ENCODE measurements at regions of chr10 and their contacts with region 1.

Region 1: GRCh38 chr10:102917962-102918816 is at the start of gene CNNM2:
- DNase-seq: peak; percentile 99 to 100 (median 100)

Region 2: DNA sequence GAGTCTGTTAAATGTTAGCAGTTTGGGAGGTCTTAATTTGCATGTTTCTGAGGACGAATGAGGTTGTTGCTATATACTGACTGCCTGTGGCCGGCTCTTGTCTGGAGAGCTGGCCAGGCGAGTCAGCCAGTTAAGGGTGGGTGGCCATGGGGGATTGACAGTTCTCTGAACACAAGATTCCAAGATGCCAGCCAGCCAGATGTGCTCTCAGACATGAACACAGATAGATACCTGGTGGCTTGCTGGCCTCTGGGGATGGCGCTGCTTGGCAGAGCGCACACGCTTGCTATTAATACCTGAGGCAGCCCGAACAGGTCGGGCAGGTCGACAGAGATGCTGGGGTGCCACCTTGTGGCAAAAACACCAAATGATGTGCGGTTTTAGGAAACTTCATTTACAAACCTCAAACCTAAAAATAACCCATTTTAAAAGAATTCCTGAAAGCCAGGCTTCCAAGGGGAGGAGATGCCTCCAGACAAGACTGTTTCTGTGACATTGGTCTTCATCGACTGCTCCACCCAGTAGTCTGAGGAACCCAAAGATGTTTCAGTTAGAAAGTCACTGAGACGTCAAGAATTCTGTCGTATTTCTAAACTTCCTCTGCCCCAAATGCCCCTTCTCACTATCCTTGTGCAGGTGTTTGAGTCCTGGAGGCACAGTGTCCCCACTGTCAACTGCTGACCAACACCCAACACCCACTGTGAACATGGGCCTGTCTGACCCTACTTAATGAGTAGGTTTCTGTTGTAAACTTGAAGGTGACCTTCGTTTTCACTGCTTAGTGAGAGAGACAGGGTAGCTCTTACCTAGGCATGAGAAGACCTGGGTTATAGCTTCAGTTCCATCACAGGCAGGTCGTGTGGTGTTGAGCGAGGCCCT is 151.5 kb after region 1 on chr10:
- intact Hi-C with region 1: loop called (anchors 5 kb)
- DNase-seq: peak; percentile 46 to 85 (median 70)

Region 3: DNA sequence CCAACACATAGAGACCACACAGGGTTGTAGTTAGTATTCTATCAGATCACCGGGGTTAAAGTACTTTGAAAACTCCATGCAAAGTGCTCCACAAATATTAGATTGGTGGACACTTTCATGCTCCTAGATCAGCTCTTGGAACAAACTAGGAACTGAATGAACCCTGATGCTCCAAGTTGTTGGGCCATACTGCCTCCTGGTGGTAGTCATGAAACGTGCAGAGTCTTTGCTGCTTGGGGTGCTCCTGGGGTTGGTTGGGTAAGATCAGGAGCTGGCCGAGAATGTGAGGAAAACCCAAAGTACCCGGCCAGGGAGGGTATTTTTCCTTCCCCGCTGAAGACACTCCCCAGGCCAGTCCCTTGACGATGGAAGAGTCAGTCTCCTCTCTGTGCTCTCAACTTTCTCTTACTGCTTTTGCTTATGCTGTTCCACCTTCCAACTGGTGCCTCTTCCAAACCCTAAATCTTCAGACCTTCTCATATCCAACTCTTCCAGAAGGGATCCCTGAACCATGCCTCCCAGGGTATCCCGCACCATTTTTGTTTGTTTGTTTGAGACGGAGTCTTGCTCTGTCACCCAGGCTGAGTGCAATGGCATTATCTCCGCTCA is 326.6 kb after region 1 on chr10:
- intact Hi-C with region 1: loop called (anchors 2 kb)
- DNase-seq: peak; percentile 34 to 92 (median 81)

Region 4: DNA sequence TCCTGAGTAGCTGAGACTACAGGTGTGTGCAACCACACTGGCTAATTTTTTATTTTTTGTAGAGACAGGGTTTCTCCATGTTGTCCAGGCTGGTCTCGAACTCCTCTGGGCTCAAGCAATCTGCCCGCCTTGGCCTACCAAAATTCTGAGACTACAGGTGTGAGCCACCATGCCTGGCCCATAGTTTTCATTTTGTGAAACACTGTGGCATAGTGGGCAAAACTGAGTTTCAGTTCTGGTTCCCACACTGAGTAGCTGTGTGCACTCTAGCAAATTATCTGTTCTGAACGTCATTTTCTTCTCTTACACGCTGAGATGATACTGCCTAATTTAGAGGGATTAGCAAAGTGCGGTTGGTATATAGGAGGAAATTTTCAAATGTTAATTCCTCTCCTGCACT is 464.6 kb after region 1 on chr10:
- intact Hi-C with region 1: no loop called
- DNase-seq: no peak